PC-9 (cell line): ENCODE measurements at regions of chr9 and their contacts with region 1.

Region 1: DNA sequence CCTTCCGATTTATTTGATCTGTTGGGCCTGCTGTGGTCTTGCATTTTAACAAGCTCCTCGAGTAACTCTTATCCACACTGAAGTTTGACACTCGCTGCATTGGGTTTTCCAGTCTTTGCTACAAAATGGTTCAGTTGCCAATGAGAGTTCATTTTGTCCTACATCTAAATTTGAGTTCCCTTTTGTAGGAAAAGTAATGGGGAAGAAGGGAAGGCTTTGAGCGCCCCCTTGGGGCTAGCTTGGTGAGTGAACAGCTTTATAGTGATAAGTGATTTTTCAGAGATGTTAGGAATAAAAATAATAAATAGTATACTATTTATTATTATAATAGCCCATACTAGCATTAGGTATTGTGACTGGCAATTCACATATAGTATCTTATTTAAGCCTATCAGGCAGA is 89.9 kb upstream of the GNAQ start:
- DNase-seq: peak; percentile 26 to 70
- H3K4me3 ChIP-seq: no peak overlapping the region
- H3K27ac ChIP-seq: no peak overlapping the region
- H3K4me1 ChIP-seq: peaks cover 21% of the 10 kb centered on the region
- H3K27me3 ChIP-seq: no peaks in the 10 kb centered on the region
- CTCF ChIP-seq: peak; percentile 76

Region 2: DNA sequence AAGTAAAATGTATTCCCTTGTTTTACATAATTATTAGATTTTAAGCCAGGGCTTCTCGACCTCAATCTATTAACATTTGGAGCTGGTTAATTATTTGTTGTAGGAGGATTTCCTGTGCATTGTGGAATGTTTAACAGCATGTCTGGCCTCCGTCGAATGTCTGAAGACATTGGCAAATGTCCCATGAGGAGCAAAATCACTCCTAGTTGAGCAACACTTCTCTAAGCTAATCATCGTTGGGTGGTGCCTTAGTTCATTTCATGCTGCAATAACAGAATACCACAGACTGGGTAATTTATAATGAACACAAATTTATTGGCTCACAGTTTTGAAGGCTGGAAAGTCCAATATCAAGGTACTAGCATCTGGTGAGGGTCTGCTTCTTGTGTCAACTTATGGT is 957.6 kb before region 1 on chr9:
- CTCF ChIA-PET with region 1: no interaction called
- POLR2A ChIA-PET with region 1: no interaction called
- intact Hi-C with region 1: loop called (anchors 10 kb)
- DNase-seq: no peak
- H3K4me3 ChIP-seq: no peak overlapping the region
- H3K27ac ChIP-seq: no peak overlapping the region
- H3K4me1 ChIP-seq: no peaks in the 10 kb centered on the region
- H3K27me3 ChIP-seq: no peaks in the 10 kb centered on the region
- CTCF ChIP-seq: no peak

Region 3: GRCh38 chr9:77456829-77457437 is 664.6 kb before region 1 on chr9:
- CTCF ChIA-PET with region 1: no interaction called
- POLR2A ChIA-PET with region 1: no interaction called
- intact Hi-C with region 1: loop called (anchors 5 kb)
- DNase-seq: peak; percentile 75 to 84
- H3K4me3 ChIP-seq: no peak overlapping the region
- H3K27ac ChIP-seq: no peak overlapping the region
- H3K4me1 ChIP-seq: no peaks in the 10 kb centered on the region
- H3K27me3 ChIP-seq: no peaks in the 10 kb centered on the region
- CTCF ChIP-seq: peak; percentile 93

Region 4: GRCh38 chr9:77751341-77752091 is 370.0 kb before region 1 on chr9:
- CTCF ChIA-PET with region 1: no interaction called
- POLR2A ChIA-PET with region 1: no interaction called
- intact Hi-C with region 1: loop called (anchors 5 kb)
- DNase-seq: peak; percentile 28 to 38
- H3K4me3 ChIP-seq: no peak overlapping the region
- H3K27ac ChIP-seq: no peak overlapping the region
- H3K4me1 ChIP-seq: no peaks in the 10 kb centered on the region; the same call in 1 of the 2 replicates
- H3K27me3 ChIP-seq: no peaks in the 10 kb centered on the region
- CTCF ChIP-seq: peak; percentile 77

Region 5: GRCh38 chr9:77977210-77977611 is 144.3 kb before region 1 on chr9:
- CTCF ChIA-PET with region 1: interaction called, 7 read pairs
- POLR2A ChIA-PET with region 1: no interaction called
- intact Hi-C with region 1: loop called (anchors 5 kb)
- DNase-seq: peak; percentile 39 to 43
- H3K4me3 ChIP-seq: no peak overlapping the region
- H3K27ac ChIP-seq: no peak overlapping the region
- H3K4me1 ChIP-seq: peaks cover 25% of the 10 kb centered on the region
- H3K27me3 ChIP-seq: no peaks in the 10 kb centered on the region
- CTCF ChIP-seq: peak; percentile 36; the same call in 1 of the 2 replicates

Region 6: GRCh38 chr9:78089101-78089500 is 32.4 kb before region 1 on chr9:
- CTCF ChIA-PET with region 1: no interaction called
- POLR2A ChIA-PET with region 1: no interaction called
- intact Hi-C with region 1: no loop called
- DNase-seq: no peak
- H3K4me3 ChIP-seq: no peak overlapping the region
- H3K27ac ChIP-seq: no peak overlapping the region
- H3K4me1 ChIP-seq: no peaks in the 10 kb centered on the region
- H3K27me3 ChIP-seq: no peaks in the 10 kb centered on the region
- CTCF ChIP-seq: no peak

Region 7: DNA sequence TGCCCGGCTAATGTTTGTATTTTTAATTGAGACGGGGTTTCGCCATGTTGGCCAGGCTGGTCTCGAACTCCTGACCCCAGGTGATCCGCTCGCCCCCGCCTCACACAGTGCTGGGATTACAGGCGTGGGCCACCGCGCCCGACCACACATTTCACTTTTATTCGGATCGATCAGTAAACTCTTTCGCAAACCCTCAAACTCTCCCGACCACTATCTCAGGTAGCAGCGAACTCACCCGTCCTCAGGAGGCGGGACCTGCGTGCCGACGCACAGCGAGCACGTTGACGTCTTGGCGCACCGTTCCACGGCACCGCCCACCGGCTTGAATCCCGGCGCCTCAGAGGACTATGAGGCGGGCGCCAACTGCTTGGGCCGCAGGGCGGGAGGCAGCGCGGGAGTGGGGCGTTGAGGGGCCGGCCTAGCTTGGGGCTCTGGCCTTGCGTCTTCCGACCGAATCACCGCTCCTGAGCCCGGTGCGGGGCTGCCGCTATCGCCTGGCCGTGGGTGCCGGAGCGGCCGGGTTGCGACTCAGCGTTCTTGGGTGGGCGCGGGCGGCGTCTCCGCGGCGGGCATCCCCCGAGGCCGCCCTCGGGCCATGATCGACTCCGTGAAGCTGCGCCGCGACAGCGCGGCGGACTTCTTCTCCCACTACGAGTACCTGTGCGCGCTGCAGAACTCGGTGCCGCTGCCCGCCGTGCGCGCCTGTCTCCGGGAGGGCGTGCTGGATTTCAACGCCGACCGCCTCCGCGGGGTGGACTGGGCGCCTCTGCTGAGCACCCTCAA is 114.5 kb after region 1 on chr9 and contains the start of gene CEP78:
- CTCF ChIA-PET with region 1: no interaction called
- POLR2A ChIA-PET with region 1: no interaction called
- intact Hi-C with region 1: loop called (anchors 2 kb)
- DNase-seq: peak; percentile 90 to 94
- H3K4me3 ChIP-seq: peak within 1 kb of the TSS; percentile 94
- H3K27ac ChIP-seq: peak within 1 kb of the TSS; percentile 56
- H3K4me1 ChIP-seq: peaks cover 7% of the 10 kb centered on the region
- H3K27me3 ChIP-seq: no peaks in the 10 kb centered on the region
- CTCF ChIP-seq: no peak
- total RNA-seq, gene CEP78: 37.8 and 38.3 TPM in 2 replicates